ENCODE measurements at regions of chr4 and their contacts with region 1.

Region 1: DNA sequence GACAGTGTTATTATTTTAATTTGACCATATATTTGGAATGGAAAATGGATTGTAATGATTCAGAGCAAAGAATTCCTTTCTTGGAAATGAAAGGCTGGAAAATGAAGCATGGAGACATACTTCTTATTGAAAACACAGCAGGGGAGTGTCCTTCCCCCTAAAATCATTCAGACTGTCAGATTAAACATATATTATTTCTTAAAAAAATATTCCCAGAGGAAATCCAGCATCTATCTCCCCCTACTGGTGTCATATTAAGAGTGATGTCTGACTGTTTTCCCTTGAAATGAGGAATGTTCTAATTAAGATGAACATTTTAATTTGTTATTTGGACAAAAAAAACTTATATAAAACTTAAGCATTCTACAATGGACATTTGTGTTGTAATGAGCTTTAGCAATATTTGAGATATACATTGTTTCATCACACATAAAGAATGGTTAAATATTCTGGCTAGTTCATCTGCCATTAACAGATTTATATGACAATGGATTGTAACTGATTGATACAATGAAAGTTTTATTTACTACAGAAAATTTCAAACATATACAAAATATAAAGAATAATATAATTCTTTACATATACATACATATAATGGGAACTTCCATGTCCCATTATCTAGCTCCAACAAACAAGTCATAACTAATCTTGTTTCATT is 264.6 kb downstream of the SPRY1 start:
- H3K4me3 ChIP-seq: no peak overlapping the region
- H3K27ac ChIP-seq: no peak overlapping the region
- H3K4me1 ChIP-seq: no peaks in the 10 kb centered on the region
- CTCF ChIP-seq: no peak

Region 2: GRCh38 chr4:123278755-123279154 is 382.5 kb before region 1 on chr4:
- CTCF ChIA-PET with region 1: no interaction called
- POLR2A ChIA-PET with region 1: no interaction called
- H3K4me3 ChIP-seq: no peak overlapping the region
- H3K27ac ChIP-seq: no peak overlapping the region
- H3K4me1 ChIP-seq: no peaks in the 10 kb centered on the region
- CTCF ChIP-seq: no peak

Region 3: GRCh38 chr4:123564758-123565346 is 96.4 kb before region 1 on chr4:
- CTCF ChIA-PET with region 1: interaction called, 10 read pairs
- POLR2A ChIA-PET with region 1: no interaction called
- H3K4me3 ChIP-seq: no peak overlapping the region
- H3K27ac ChIP-seq: no peak overlapping the region
- H3K4me1 ChIP-seq: peaks cover 2% of the 10 kb centered on the region; the same call in 1 of the 2 replicates
- CTCF ChIP-seq: peak; percentile 77

Region 4: DNA sequence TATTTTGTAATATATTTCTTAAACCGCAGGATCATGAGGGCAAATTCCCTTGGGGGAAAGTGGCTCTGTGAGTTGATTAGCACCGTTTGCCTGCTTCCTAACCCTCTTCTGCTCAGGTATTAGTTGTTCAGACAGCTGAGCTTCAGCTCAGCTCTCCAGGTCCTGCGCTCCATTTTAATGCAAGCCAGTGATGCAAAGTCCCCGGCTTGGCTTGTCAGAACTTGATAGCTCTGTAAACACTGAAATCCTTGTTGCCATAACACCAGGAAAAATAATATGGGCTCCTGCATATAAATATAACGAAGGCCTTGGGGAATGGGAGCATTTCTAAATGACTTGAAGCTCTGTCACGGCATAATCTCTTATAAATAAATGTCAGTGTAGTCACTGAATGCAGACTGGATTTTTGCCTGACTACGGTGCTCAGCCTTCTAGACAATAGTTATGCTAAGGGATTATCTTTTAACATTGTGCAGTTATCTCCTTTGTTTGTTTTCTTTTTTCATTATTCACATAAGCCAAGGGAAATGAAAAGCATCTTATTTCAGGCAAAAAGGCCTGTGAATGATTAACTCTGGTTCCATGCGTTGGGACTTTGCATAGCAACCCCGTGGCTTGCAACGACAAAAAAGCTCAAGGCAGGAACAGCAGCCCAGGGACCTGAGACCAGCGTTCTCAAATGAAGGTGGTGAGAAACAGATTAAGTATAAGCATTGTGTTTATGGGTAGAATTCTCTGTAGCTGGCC is 11.4 kb before region 1 on chr4:
- CTCF ChIA-PET with region 1: interaction called, 16 read pairs
- POLR2A ChIA-PET with region 1: no interaction called
- H3K4me3 ChIP-seq: no peak overlapping the region
- H3K27ac ChIP-seq: peak overlapping the region; percentile 71
- H3K4me1 ChIP-seq: peaks cover 4% of the 10 kb centered on the region; the same call in 1 of the 2 replicates
- CTCF ChIP-seq: no peak

Region 5: GRCh38 chr4:123671633-123672404 is 10.6 kb after region 1 on chr4:
- CTCF ChIA-PET with region 1: interaction called, 19 read pairs
- POLR2A ChIA-PET with region 1: no interaction called
- H3K4me3 ChIP-seq: no peak overlapping the region
- H3K27ac ChIP-seq: no peak overlapping the region
- H3K4me1 ChIP-seq: 0 out of 2 replicates have a peak, but pooled peaks cover 2% of the 10 kb centered on the region
- CTCF ChIP-seq: no peak

Measured in HEK293 (cell line).